ENCODE measurements at regions of chr1 and their contacts with region 1.

Region 1: GRCh38 chr1:22976461-22977243 is 4.0 kb upstream of the LACTBL1 start:
- DNase-seq: peak; percentile 78
- ATAC-seq: peak; percentile 98
- H3K4me3 ChIP-seq: 0 out of 4 replicates have a peak overlapping the region, but pooled peaks of 1 of the 2 experiments have one; percentile 2
- H3K27ac ChIP-seq: no peak overlapping the region
- H3K4me1 ChIP-seq: peaks cover 4 to 22% of the 10 kb centered on the region in 2 experiments; a peak in 2 of 4 replicates
- H3K27me3 ChIP-seq: no peaks in the 10 kb centered on the region
- CTCF ChIP-seq: peak; percentile 90 to 98 (median 95)
- POLR2A ChIP-seq: no peak
- RAD21 ChIP-seq: peak; percentile 96

Region 2: GRCh38 chr1:22892789-22893188 is 83.9 kb before region 1 on chr1:
- CTCF ChIA-PET with region 1: no interaction called
- POLR2A ChIA-PET with region 1: no interaction called
- RAD21 ChIA-PET with region 1: no interaction called
- intact Hi-C with region 1: no loop called
- DNase-seq: no peak
- ATAC-seq: no peak
- H3K4me3 ChIP-seq: no peak overlapping the region
- H3K27ac ChIP-seq: no peak overlapping the region
- H3K4me1 ChIP-seq: no peaks in the 10 kb centered on the region
- H3K27me3 ChIP-seq: no peaks in the 10 kb centered on the region
- CTCF ChIP-seq: no peak
- POLR2A ChIP-seq: no peak
- RAD21 ChIP-seq: no peak

Region 3: DNA sequence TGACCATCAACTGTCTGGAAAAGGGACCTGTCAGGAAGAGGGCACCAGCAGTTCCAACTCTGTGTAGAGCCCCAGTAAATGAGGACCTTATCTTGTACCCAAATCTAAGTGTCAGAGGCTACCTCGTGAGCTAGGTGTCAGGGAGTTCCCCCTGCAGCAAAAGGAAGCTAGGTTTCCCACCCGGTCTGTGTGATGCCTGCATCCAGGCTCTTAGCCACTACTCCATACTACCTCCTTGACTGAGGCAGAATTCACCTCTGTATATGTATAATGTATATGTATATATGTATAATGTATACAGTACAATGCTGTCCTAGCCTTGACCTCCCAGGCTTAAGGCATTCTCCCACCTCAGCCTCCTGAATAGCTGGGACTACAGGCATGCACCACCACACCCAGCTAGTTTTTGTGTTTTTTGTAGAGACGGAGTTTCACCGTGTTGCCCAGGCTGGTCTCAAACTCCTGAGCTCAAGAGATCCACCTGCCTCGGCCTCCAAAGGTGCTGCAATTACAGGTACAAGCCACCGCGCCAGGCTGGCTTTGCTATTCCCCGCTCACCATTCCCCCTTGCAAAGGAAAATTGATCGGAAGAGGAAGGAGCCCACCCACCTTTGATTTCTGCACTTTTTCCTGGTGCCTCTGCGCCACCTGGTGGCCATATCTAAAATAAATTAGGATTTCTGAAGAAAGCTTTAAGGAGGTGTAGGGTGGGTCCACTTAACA is 207.7 kb after region 1 on chr1:
- CTCF ChIA-PET with region 1: interaction called, 47 read pairs
- POLR2A ChIA-PET with region 1: interaction called, 4 read pairs
- RAD21 ChIA-PET with region 1: interaction called, 3 to 5 read pairs
- intact Hi-C with region 1: loop called (anchors 1 kb)
- DNase-seq: no peak
- ATAC-seq: peak; percentile 59
- H3K4me3 ChIP-seq: no peak overlapping the region
- H3K27ac ChIP-seq: no peak overlapping the region
- H3K4me1 ChIP-seq: peaks cover 17 to 26% of the 10 kb centered on the region in 2 experiments
- H3K27me3 ChIP-seq: no peaks in the 10 kb centered on the region
- CTCF ChIP-seq: peak; percentile 59 to 95 (median 76)
- POLR2A ChIP-seq: no peak
- RAD21 ChIP-seq: peak; percentile 96

Region 4: DNA sequence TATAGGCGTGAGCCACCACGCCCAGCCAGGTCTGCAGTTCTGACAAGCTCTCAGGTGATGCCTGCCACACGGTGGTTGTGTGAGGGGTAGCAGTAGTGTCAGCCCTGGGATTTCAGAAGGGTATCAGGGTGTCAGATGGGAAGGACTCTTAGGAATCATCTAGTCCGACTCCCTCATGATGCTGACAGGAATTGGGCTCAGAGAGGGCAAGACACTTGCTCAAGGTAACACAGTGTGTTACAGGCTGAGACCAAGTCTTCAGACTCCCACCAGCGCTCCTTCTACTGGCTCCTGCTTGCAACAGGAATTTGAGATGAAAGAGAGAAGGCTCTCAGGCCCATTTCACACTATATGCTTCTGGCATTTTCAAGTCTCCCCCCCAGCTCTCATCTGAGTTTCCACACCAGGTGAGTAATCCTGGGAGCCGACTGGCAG is 233.7 kb after region 1 on chr1:
- CTCF ChIA-PET with region 1: no interaction called
- POLR2A ChIA-PET with region 1: no interaction called
- RAD21 ChIA-PET with region 1: interaction called in 1 of 2 experiments, 4 read pairs
- intact Hi-C with region 1: loop called (anchors 1 kb)
- DNase-seq: peak; percentile 42
- ATAC-seq: peak; percentile 85
- H3K4me3 ChIP-seq: no peak overlapping the region
- H3K27ac ChIP-seq: no peak overlapping the region
- H3K4me1 ChIP-seq: peaks cover 12 to 39% of the 10 kb centered on the region in 2 experiments
- H3K27me3 ChIP-seq: no peaks in the 10 kb centered on the region
- CTCF ChIP-seq: peak; percentile 39 to 59 (median 53); a peak in 5 of 6 replicates
- POLR2A ChIP-seq: no peak
- RAD21 ChIP-seq: peak; percentile 72

Region 5: DNA sequence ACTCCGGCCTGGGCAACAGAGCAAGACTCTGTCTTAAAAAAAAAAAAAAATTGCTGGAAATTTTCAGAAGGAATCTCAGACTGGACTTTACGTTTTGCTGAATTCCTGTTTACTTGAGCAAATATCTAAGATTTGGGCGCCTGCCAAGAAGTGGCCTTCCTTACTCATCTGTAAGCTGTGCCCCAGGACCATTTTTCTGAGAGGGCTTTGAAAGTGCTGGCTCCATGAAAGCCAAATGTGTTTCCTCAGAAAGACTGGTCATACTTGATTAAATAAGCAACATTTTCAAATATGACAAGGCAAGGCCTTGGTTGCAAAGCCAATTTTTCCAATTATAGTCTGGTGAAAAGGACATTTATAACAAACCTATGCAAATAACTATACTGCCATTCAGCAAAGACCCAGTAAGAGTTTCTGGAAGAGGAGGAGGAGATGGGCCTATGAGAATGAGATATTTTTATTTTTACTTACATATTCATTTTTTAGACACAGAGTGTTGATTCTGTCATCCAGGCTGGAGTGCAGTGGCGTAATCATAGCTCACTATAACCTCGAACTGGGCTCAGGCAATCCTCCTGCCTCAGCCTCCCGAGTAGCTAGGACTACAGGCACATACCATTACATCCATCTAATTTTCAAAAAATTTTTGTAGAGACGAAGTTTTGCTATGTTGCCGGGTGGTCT is 296.9 kb after region 1 on chr1:
- CTCF ChIA-PET with region 1: no interaction called
- POLR2A ChIA-PET with region 1: no interaction called
- RAD21 ChIA-PET with region 1: no interaction called
- intact Hi-C with region 1: loop called (anchors 5 kb)
- DNase-seq: peak; percentile 6
- ATAC-seq: no peak
- H3K4me3 ChIP-seq: no peak overlapping the region
- H3K27ac ChIP-seq: no peak overlapping the region
- H3K4me1 ChIP-seq: peaks cover 29 to 41% of the 10 kb centered on the region in 2 experiments
- H3K27me3 ChIP-seq: no peaks in the 10 kb centered on the region
- CTCF ChIP-seq: no peak
- POLR2A ChIP-seq: no peak
- RAD21 ChIP-seq: no peak